ENCODE measurements at regions of chr1 and their contacts with region 1.

Region 1: DNA sequence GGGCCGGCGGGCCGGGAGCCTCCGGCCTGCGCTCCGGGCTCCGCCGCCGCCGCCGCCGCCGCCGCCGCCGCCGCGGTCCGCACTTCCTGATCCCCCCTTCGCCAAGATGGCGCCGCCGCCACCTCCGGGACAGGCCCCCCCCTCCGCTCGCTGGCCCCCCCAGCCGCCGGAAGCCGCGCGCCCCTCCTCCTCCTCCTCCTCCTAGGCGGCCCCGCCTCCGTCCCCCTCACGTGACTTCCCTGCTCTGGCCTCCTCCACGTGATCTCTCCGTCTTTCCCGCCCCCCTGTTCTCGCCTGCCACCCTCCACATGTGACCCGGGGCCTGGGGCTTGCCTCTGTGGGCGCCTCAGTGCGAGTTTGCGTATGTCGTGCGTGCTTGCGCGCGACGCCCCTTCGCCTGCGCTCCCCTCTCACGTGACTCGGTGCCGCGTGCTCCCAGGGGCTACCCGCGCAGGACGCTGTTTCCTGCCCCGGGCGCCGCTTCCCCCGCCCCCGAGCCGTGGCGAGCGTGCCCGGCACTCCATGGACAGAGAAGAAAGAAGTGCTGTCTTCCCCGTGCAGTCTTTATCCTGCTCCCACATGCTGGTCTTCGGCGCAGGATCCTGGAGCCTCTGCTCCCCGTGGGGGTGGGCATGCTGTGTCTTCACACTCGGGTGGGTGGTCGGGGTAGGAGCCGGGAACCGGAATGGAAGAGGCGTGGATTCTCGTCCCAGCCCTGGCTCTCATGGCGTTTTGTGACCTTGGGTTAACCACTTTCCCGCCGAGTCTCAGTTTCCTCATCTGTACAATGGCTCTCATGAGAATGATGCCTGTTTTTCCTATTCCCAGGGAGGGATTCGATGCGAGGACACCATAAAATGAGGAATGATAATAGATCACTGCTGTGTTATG is at the start of gene UBE2Q1:
- DNase-seq: peak; percentile 100
- ATAC-seq: peak; percentile 95
- H3K4me3 Mint-ChIP-seq: peak within 1 kb of the TSS; percentile 93
- H3K27ac Mint-ChIP-seq: peak within 1 kb of the TSS; percentile 96
- H3K4me1 Mint-ChIP-seq: peaks cover 20% of the 10 kb centered on the region
- H3K27me3 Mint-ChIP-seq: no peaks in the 10 kb centered on the region
- total RNA-seq, gene UBE2Q1: 89.3 to 101 TPM

Region 2: DNA sequence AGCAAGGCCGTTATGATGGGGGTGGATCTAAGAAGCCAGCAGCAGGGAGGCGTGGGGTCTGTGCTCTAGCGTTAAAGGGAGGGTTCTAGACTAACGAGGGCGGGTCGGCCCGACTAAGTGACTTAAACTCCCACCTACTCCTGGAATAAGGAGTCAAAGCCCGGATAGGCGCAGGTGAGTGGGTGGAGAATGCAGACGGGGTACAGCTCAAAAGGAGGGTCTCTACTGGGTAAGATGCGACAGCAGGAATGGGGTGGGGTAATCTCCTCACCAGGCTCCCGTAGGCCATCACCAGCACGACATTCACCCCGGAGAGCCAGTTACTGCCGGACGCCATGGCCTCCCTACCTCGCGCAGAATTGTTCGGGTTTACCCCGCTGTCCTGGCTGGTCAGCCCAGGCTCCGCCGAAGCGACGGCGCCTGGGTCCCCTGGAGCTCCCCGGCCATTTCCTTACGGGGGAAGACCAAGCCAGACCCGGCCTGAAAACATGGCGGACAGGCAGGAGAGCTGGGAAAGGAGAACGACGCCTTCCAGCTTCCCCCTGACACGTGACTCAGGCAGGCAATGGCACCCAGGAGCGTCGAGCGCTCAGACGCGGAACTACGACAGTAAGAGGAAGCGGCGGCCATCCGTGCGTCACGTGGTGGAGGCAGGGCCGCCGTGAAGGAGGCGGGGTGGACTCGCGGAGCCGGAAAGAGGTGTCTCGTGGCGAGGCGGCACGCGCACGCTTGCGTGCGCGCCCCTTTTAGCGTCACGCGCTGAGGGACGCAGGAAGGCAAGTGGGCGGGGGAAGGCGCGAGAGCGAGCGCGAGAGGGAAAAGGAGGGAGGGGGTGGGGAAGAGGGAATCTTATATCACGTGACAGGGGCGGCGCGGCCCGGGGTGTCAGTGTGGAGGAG is 338.5 kb before region 1 on chr1 and contains the start of gene UBAP2L:
- CTCF ChIA-PET with region 1: no interaction called
- POLR2A ChIA-PET with region 1: no interaction called
- intact Hi-C with region 1: loop called in 1 of 2 experiments (anchors 1 kb)
- DNase-seq: peak; percentile 99
- ATAC-seq: peak; percentile 92
- H3K4me3 Mint-ChIP-seq: peak within 1 kb of the TSS; percentile 99
- H3K27ac Mint-ChIP-seq: peak within 1 kb of the TSS; percentile 100
- H3K4me1 Mint-ChIP-seq: peaks cover 70% of the 10 kb centered on the region
- H3K27me3 Mint-ChIP-seq: no peaks in the 10 kb centered on the region
- total RNA-seq, gene UBAP2L: 205 to 255 TPM

Region 3: DNA sequence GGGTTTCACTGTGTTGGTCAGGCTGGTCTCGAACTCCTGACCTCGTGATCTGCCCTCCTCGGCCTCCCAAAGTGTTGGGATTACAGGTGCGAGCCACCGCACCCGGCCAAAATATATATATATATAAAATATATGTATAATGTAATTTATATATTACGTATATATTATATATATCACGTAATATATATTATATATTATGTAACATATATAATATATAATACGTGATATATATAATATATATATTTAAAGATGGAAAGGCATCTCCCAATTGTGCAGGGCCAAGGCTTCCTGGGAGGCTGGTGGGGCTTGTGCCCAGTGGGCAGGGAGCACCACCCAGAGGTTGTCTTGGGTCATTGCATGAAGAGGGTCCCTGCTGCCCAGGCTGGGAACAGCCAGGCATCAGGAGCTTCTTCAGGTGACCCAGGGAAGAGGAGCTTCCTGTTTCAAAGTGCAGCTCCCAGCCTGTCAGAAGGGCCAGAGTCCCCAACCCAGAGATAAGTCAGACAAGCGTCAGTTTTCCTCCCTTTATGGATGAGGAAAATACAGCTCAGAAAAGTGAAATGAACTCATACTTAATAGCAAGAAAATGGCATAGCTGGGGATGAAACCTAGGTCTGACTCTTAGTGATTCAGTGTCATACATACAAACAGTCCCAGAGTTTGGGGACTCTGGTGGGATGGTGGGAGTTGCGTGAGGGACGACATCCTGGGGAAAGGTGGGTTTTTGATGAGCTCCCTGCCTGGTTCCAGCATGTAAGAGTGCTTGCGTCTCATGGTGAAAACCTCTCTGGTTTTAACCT is 12.4 kb before region 1 on chr1:
- CTCF ChIA-PET with region 1: interaction called, 22 read pairs
- POLR2A ChIA-PET with region 1: no interaction called
- intact Hi-C with region 1: no loop called
- DNase-seq: peak; percentile 79
- ATAC-seq: peak; percentile 94
- H3K4me3 Mint-ChIP-seq: no peak overlapping the region
- H3K27ac Mint-ChIP-seq: no peak overlapping the region
- H3K4me1 Mint-ChIP-seq: peaks cover 9% of the 10 kb centered on the region
- H3K27me3 Mint-ChIP-seq: peaks cover 2% of the 10 kb centered on the region

Region 4: GRCh38 chr1:154669464-154670282 is 110.9 kb after region 1 on chr1:
- CTCF ChIA-PET with region 1: interaction called, 19 read pairs
- POLR2A ChIA-PET with region 1: no interaction called
- intact Hi-C with region 1: loop called (anchors 1 kb)
- DNase-seq: peak; percentile 88
- ATAC-seq: peak; percentile 100
- H3K4me3 Mint-ChIP-seq: no peak overlapping the region
- H3K27ac Mint-ChIP-seq: no peak overlapping the region
- H3K4me1 Mint-ChIP-seq: peaks cover 17% of the 10 kb centered on the region
- H3K27me3 Mint-ChIP-seq: peaks cover 2% of the 10 kb centered on the region

Region 5: GRCh38 chr1:154878371-154879022 is 319.7 kb after region 1 on chr1:
- CTCF ChIA-PET with region 1: interaction called, 17 read pairs
- POLR2A ChIA-PET with region 1: no interaction called
- intact Hi-C with region 1: loop called (anchors 1 kb)
- DNase-seq: peak; percentile 87
- ATAC-seq: peak; percentile 95
- H3K4me3 Mint-ChIP-seq: no peak overlapping the region
- H3K27ac Mint-ChIP-seq: no peak overlapping the region
- H3K4me1 Mint-ChIP-seq: peaks cover 10% of the 10 kb centered on the region
- H3K27me3 Mint-ChIP-seq: peaks cover 4% of the 10 kb centered on the region

Region 6: DNA sequence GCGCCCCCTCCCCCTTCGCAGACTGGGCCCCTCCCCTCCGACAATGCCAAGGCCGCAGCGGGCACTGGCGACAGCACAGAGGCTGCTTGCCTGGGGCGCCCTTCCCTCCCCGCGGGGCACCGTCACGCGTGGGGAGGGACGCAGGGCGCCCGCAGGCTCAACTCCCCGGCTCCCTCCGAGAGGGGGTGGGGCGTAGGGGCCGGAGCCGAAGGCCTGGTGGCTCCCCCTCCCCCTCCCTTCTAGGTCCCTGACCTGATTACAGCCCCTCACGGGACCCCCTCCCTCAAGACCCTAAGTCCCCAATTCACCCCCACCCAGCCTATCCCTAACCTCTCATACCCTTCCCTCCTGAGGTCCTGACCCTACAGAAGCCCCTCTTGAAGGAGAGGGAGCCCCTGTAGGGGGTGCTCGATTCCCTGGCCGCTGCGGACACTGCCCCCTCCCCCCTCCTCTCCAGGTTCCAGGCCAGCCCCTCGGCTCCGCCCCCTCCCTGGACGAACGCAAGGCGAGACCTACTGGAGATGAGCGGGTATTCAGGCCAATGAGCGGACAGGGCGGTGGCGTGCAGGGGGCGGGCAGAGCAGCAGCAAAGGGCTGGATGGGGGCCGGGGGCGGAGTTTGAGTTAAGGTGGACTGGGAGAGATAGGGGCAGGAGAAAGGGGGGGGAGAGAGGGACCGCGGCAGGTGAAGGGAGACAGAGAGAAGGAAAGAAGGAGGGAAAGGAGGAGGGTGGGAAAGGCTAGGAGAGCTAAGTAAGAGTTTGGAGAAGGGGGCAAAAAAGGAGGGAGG is 443.0 kb after region 1 on chr1:
- CTCF ChIA-PET with region 1: interaction called, 7 read pairs
- POLR2A ChIA-PET with region 1: no interaction called
- intact Hi-C with region 1: loop called in 1 of 2 experiments (anchors 1 kb)
- DNase-seq: peak; percentile 100
- ATAC-seq: peak; percentile 67
- H3K4me3 Mint-ChIP-seq: peak overlapping the region; percentile 96
- H3K27ac Mint-ChIP-seq: peak overlapping the region; percentile 94
- H3K4me1 Mint-ChIP-seq: peaks cover 54% of the 10 kb centered on the region
- H3K27me3 Mint-ChIP-seq: no peaks in the 10 kb centered on the region

Region 7: GRCh38 chr1:155227261-155228095 is 668.7 kb after region 1 on chr1:
- CTCF ChIA-PET with region 1: no interaction called
- POLR2A ChIA-PET with region 1: no interaction called
- intact Hi-C with region 1: no loop called
- DNase-seq: peak; percentile 99
- ATAC-seq: peak; percentile 98
- H3K4me3 Mint-ChIP-seq: peak overlapping the region; percentile 96
- H3K27ac Mint-ChIP-seq: peak overlapping the region; percentile 97
- H3K4me1 Mint-ChIP-seq: peaks cover 27% of the 10 kb centered on the region
- H3K27me3 Mint-ChIP-seq: no peaks in the 10 kb centered on the region